ENCODE measurements at regions of chr7 and their contacts with region 1.

Region 1: DNA sequence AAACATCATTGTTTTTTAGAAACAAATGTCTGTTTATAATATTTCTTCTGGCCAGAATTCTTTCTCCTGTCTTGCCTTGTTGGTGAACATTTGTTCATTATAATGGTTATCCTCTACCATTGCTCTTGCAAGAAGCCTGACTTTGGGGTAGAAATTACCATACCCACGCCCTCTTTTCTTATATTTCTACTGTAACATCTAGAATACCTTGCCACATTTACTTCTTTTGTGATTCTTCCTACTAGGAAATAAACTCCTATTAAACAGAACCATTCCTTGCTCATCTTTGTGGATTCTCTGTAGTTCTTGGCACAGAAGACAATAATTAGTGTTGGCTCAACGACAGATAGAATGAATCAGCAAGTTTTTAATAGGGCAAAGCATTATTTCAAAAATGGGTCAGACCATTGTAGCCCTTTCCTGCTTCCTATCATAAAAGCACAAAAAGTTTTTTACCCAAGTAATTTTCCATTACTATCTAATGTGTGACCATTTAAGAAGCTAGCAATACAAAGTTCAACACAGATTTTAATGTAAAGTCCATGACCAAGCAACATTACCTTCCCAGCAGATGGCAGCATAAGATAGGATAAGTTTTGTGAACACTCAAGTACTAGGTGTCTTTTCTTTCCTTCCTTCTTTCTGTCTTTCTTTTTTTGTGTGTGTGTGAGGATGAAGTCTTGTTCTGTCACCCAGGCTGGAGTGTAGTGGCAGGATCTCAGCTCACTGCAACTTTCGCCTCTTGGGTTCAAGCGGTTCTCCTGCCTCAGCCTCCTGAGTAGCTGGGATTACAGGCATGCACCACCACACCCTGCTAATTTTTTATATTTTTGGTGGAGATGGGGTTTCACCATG is 270.4 kb downstream of the HGF start:
- DNase-seq: no peak

Region 2: GRCh38 chr7:81669476-81670105 is 170.1 kb after region 1 on chr7:
- intact Hi-C with region 1: loop called (anchors 10 kb)
- DNase-seq: no peak

Region 3: DNA sequence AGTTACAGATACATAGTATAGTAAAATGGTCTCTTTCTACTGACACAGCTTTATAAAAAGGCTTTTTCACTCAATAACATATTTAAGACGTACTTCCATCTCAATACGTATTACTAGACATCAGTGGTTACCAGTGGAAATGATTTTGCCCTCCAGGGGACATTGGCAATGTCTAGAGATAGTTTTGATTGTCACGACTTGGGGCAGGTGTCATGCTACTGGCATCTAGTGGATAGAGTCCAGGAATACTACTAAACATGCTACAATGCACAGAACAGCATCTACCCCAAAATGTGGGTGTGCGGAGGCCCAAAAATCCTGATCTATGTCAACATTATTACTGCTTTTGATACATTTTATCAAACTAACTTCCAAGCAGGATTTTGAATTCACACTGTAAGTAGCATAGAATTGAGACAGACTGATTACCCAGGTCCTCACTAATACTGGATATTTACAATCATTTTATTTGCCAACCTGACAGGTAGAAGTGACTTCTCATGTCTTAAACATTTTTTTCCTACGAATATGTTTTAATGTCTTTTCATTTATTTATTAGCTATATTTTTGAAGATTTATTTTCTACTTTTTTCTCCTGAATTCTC is 216.6 kb after region 1 on chr7:
- intact Hi-C with region 1: loop called (anchors 10 kb)
- DNase-seq: no peak

Region 4: DNA sequence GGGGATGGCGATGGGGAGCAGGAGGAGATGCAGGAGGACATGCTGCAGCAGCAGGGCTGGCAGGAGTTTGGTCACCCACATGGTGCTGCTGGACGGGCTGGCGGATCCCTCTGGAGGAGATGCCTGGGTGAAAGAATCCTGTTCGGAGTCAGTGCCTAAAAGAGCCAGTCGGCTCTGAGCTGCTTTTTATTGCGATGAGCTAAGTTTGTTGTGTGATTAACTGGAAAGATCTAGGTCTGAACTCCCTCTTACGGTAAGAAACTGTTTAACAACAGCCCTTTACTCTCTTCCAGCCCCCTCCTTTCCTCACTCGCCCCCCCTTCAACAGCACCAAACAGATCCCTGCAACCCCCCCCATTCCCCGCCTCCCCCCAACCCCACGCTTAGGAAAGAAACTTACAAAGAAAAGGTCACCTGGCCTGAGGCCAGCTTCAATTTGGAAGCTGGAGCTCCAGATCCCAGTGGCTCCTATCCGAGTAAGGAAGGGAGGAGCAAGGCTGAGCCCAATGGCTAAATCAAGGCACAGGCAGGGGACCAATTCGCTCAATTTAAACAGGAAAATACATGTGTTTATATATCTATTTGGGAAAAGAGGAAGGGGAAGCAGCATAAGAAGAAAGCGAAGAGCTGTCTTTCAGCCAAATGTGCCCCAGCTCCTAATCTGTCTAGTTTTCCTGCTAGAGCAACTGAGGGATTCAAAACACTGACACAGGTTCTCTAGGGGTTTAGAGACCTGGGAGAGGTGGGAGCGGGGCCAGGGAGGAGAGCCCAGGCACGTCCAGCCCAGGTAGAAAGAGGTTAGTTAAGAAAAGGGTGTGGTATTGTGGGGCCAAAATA is 270.6 kb after region 1 on chr7 and contains the start of gene HGF:
- intact Hi-C with region 1: loop called (anchors 5 kb)
- DNase-seq: peak; percentile 84
- total RNA-seq, gene HGF: 6.6 TPM

Region 5: GRCh38 chr7:81956520-81956919 is 457.0 kb after region 1 on chr7:
- intact Hi-C with region 1: loop called (anchors 2 kb)
- DNase-seq: no peak

Region 6: GRCh38 chr7:82017334-82017943 is 518.0 kb after region 1 on chr7:
- intact Hi-C with region 1: loop called (anchors 5 kb)
- DNase-seq: no peak

Measured in cardiac septum (tissue), 1 donor.